ENCODE measurements at regions of chr6 and their contacts with region 1.

Region 1: DNA sequence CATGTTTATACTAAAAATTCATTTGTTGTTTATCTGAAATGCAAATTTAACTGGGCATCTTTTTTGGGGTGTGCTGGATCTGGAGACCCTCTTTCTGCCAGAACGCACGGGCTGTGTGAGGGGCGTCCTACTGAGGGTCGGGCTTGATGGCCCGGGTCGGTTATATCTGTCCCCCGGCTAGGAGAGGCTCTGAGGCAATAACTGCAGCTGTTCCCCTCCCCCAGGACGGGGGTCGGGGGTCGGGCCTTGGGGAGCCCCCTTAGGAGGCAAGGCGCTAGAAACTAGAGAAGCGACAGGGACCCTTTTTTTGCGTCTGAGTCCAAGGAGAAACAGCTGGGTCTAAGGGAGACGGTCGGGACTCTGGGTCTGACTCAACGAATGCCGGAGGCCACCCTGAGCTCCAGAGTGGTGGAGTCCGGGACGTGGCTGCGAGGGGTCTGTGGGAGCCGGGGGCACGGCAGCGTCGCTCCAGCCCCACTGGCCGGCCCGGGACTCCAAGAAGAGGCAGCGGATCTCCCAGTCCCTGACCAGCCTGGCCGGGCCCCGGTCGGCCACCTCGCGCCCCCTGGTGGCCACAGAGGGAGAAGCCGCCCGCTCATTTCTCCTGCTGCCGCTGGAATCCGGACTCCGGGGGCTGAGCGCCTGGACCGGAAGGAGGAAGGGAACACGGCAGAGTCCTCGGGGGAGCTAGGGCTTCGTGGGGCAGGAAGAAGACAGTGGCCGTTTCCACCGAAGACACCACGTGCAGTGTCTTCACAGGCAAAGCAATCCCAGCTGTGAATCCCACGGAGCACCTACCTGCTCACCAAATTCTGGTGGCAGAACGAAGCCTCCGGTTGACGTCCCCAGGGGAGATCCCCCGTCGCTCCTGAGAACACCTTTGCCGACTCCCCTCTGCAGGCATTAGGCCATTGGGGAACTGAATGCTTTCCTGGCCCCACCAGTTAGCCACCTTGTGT is 24.0 kb upstream of the SCML4 start:
- DNase-seq: peak; percentile 81 to 94 (median 83)
- ATAC-seq: peak; percentile 83 to 98 (median 95)
- H3K4me3 ChIP-seq: peak overlapping the region in 11 of 12 donors; percentile 4 to 57 (median 43)
- H3K27ac ChIP-seq: no peak overlapping the region
- H3K4me1 ChIP-seq: peaks cover 0 to 11% (median 5%) of the 10 kb centered on the region in 12 donors
- H3K27me3 ChIP-seq: peaks cover 0 to 16% (median 6%) of the 10 kb centered on the region in 9 donors
- CTCF ChIP-seq: peak; percentile 93 to 98 (median 97)
- POLR2A ChIP-seq: no peak

Region 2: GRCh38 chr6:107132330-107132954 is 715.7 kb before region 1 on chr6:
- intact Hi-C with region 1: loop called in 1 of 10 experiments (anchors 10 kb)
- DNase-seq: peak in 1 of 5 donors; percentile 30
- ATAC-seq: no peak
- H3K4me3 ChIP-seq: no peak overlapping the region
- H3K27ac ChIP-seq: no peak overlapping the region
- H3K4me1 ChIP-seq: peaks cover 0 to 10% (median 0%) of the 10 kb centered on the region in 12 donors
- H3K27me3 ChIP-seq: no peaks in the 10 kb centered on the region
- CTCF ChIP-seq: peak in 10 of 12 donors; percentile 15 to 55 (median 45)
- POLR2A ChIP-seq: no peak

Region 3: GRCh38 chr6:107674995-107675738 is 173.0 kb before region 1 on chr6:
- intact Hi-C with region 1: loop called (anchors 1 to 5 kb)
- DNase-seq: peak; percentile 85 to 92 (median 87)
- ATAC-seq: peak; percentile 88 to 95 (median 94)
- H3K4me3 ChIP-seq: peak overlapping the region in 9 of 12 donors; percentile 7 to 46 (median 26)
- H3K27ac ChIP-seq: peak overlapping the region in 3 of 12 donors; percentile 16 to 57 (median 55)
- H3K4me1 ChIP-seq: peaks cover 0 to 32% (median 16%) of the 10 kb centered on the region in 12 donors
- H3K27me3 ChIP-seq: no peaks in the 10 kb centered on the region
- CTCF ChIP-seq: peak; percentile 83 to 95 (median 92)
- POLR2A ChIP-seq: no peak

Region 4: GRCh38 chr6:107740496-107741190 is 107.5 kb before region 1 on chr6:
- intact Hi-C with region 1: no loop called
- DNase-seq: no peak
- ATAC-seq: no peak
- H3K4me3 ChIP-seq: peak overlapping the region in 1 of 12 donors; percentile 26
- H3K27ac ChIP-seq: peak overlapping the region in 1 of 12 donors; percentile 65
- H3K4me1 ChIP-seq: peaks cover 0 to 4% (median 0%) of the 10 kb centered on the region in 12 donors
- H3K27me3 ChIP-seq: peaks cover 0 to 11% (median 0%) of the 10 kb centered on the region in 9 donors
- CTCF ChIP-seq: no peak
- POLR2A ChIP-seq: no peak

Region 5: DNA sequence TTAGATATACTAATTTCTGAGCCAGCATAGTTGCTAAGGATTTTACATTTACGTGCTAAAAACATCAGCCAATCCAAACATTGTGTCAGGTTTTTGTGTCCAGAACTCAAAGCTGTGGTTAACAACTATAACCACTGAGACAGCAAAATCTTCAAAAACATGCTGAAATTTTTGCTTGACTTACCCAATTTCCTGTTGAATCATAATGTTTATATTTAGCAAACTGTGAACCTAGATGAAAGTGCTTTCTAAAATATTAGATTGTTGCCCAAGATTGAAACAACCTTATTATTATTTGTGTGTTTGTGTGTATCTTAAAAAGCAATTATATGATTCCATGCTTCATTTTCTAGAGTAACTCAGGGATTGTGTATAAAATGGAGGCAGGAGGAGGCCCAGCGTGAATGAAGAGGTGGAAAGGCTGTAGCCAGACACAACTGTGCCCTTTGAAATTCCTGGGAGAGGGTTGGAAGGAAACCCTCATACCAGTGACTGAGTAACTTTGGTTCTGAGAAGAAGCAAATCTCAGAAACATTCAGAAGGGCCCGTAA is 1048.1 kb after region 1 on chr6:
- intact Hi-C with region 1: no loop called
- DNase-seq: no peak
- ATAC-seq: peak in 3 of 4 donors; percentile 29 to 45 (median 31)
- H3K4me3 ChIP-seq: no peak overlapping the region
- H3K27ac ChIP-seq: peak overlapping the region; percentile 40 to 90 (median 66)
- H3K4me1 ChIP-seq: peaks cover 0 to 58% (median 26%) of the 10 kb centered on the region in 12 donors
- H3K27me3 ChIP-seq: no peaks in the 10 kb centered on the region
- CTCF ChIP-seq: no peak
- POLR2A ChIP-seq: no peak